ENCODE measurements at regions of chrX and their contacts with region 1.

Region 1: GRCh38 chrX:41802958-41803357 is 79.0 kb downstream of the GPR82 start:
- DNase-seq: no peak
- H3K4me3 ChIP-seq: no peak overlapping the region
- H3K27ac ChIP-seq: no peak overlapping the region
- H3K4me1 ChIP-seq: no peaks in the 10 kb centered on the region
- H3K27me3 ChIP-seq: peaks cover 2% of the 10 kb centered on the region
- CTCF ChIP-seq: no peak

Region 2: GRCh38 chrX:41837270-41837944 is 34.4 kb after region 1 on chrX:
- CTCF ChIA-PET with region 1: no interaction called
- dilution Hi-C with region 1: no loop called
- in situ Hi-C with region 1: no loop called
- intact Hi-C with region 1: no loop called
- DNase-seq: no peak
- H3K4me3 ChIP-seq: no peak overlapping the region
- H3K27ac ChIP-seq: no peak overlapping the region
- H3K4me1 ChIP-seq: no peaks in the 10 kb centered on the region
- H3K27me3 ChIP-seq: no peaks in the 10 kb centered on the region
- CTCF ChIP-seq: no peak

Region 3: DNA sequence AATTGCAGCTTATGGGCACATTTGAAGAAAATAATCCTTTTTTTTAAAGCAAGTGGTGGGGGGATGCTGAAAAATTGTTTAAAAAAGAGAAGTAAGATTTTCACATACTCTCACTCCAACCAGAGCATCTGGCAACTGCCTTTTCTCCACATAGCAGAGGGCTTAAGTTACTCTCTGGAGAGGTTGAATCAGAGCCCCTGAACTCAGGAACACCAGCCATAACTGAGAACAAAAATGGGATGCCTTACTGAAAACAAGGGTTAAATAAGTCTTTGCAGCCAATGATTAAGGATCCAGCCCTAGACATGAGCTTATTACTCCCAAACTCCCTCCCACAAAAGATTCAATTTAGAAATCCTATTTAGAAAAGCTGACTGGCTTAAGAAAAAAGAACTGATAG is 92.9 kb after region 1 on chrX:
- CTCF ChIA-PET with region 1: no interaction called
- dilution Hi-C with region 1: no loop called
- in situ Hi-C with region 1: no loop called
- intact Hi-C with region 1: no loop called
- DNase-seq: no peak
- H3K4me3 ChIP-seq: no peak overlapping the region
- H3K27ac ChIP-seq: no peak overlapping the region
- H3K4me1 ChIP-seq: no peaks in the 10 kb centered on the region
- H3K27me3 ChIP-seq: peaks cover 6% of the 10 kb centered on the region
- CTCF ChIP-seq: no peak

Region 4: DNA sequence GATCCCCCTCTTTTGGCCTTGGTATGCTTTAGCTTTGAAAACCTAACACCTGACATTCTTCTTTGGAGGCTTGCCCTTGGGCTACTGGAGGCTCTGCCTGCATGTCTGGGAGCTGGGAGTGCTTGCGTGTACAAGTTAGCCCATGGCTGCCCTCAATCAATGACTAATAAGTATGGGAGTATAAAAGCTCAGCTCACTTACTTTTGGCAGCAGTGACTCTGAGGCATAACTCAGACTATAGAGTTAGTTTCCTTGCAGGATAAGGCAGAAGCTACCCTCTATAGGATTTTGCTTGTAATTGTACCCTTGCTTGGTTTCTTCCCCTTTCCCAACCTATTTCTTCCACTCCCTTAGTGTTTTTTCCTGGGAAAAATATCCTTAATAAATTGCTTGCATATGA is 727.1 kb after region 1 on chrX:
- CTCF ChIA-PET with region 1: interaction called, 4 read pairs
- dilution Hi-C with region 1: no loop called
- in situ Hi-C with region 1: loop called in 1 of 2 experiments (anchors 25 kb)
- intact Hi-C with region 1: loop called (anchors 1 kb)
- DNase-seq: peak; percentile 80
- H3K4me3 ChIP-seq: no peak overlapping the region
- H3K27ac ChIP-seq: no peak overlapping the region
- H3K4me1 ChIP-seq: peaks cover 3% of the 10 kb centered on the region
- H3K27me3 ChIP-seq: no peaks in the 10 kb centered on the region
- CTCF ChIP-seq: peak; percentile 24 to 54

Measured in mammary epithelial cell (primary cell).